ENCODE measurements at regions of chr4 and their contacts with region 1.

Region 1: DNA sequence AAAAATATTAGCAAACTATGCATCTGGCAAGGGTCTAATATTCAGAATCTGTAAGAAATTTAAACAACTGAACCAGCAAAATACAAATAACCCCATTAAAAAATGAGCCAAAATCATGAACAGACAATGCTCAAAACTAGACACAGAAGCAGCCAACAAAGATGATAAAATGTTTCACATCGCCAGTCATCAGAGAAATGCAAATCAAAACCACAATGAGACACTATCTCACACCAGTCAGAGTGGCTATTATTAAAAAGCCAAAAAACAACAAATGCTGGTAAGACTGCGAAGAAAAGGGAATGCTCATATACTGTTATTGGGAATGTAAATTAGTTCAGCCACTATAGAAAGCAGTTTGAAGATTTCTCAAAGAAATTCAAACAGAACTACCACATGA is 201.3 kb upstream of the CPEB2 start:
- DNase-seq: no peak
- ATAC-seq: no peak

Region 2: GRCh38 chr4:14636563-14636962 is 164.4 kb before region 1 on chr4:
- intact Hi-C with region 1: loop called (anchors 5 kb)
- DNase-seq: no peak
- ATAC-seq: no peak

Region 3: DNA sequence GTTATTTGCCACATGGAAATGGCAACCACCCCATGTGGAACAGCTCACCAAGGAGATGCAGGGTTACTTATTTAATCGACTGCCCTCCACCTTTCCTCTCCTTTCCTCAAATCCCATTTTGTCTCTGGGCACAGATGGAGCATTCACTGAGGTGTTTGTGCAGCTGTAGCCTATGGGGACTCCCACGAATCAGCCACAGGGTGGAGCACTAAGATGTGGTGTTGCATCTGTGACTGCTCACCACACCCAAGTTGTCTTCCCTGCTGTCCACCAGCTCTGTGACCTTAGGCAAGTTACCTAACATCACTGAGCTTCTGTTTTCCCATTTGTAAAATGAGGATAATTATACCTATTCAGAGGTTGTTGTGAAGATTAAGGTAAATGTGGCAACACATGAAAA is 51.1 kb before region 1 on chr4:
- intact Hi-C with region 1: no loop called
- DNase-seq: peak; percentile 55
- ATAC-seq: peak; percentile 92

Region 4: DNA sequence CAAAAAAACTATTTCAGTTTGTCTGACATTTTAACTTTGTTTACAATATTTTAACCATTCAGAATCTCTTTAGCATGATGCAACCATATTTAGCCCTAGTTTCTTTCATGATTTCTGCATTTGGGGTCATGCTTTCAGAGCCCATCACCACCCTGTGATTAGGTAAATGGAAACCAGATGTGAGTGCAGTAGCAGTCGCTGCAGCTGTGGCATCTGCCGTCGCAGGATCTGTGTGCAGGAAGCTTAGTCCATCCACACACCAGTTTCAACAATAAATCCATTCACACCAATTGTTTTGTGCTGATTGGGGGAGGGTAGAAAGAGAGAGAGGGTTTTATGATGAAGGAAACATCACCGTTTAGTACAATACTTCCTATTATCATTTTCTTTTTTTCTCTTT is 331.8 kb after region 1 on chr4:
- intact Hi-C with region 1: no loop called
- DNase-seq: no peak
- ATAC-seq: no peak

Measured in Right ventricle myocardium superior (tissue), 1 donor.